ENCODE measurements at regions of chr7 and their contacts with region 1.

Region 1: GRCh38 chr7:108146070-108146837 is 16.1 kb upstream of the LAMB4 start:
- DNase-seq: peak; percentile 69
- H3K4me3 ChIP-seq: no peak overlapping the region
- H3K27ac ChIP-seq: peak overlapping the region in 1 of 2 experiments; percentile 40; a peak in 1 of 4 replicates
- H3K4me1 ChIP-seq: peaks cover 0 to 6% of the 10 kb centered on the region in 2 experiments; a peak in 1 of 4 replicates
- H3K27me3 ChIP-seq: no peaks in the 10 kb centered on the region
- CTCF ChIP-seq: peak; percentile 100
- EP300 ChIP-seq: peak in 1 of 2 experiments; percentile 50; a peak in 1 of 4 replicates
- RAD21 ChIP-seq: peak; percentile 100

Region 2: DNA sequence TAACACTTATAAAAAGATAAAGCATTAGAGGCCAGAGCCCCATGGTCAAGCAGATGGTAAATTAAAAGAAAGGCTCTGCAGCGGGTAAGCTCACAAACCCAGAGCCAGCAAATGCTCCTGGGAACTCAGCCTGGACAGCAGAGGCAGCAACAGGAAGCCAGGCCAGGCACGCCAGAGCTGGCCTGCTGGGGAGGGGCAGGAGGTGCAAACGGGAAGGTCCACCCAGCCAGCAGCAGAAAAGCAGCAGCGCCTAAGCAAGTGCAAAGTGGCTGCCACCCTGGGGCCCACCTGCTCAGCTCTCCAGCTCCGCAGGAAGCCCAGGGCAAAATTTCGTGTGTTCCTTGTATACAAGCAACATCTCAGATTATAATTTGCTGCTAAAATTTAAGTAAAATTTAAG is 759.1 kb before region 1 on chr7:
- CTCF ChIA-PET with region 1: no interaction called
- POLR2A ChIA-PET with region 1: no interaction called
- DNase-seq: peak; percentile 75
- H3K4me3 ChIP-seq: no peak overlapping the region
- H3K27ac ChIP-seq: peak overlapping the region; percentile 74 to 96
- H3K4me1 ChIP-seq: peaks cover 8 to 27% of the 10 kb centered on the region in 2 experiments; a peak in 3 of 4 replicates
- H3K27me3 ChIP-seq: no peaks in the 10 kb centered on the region
- CTCF ChIP-seq: no peak
- EP300 ChIP-seq: peak in 1 of 2 experiments; percentile 43; a peak in 1 of 4 replicates
- RAD21 ChIP-seq: peak; percentile 44

Region 3: DNA sequence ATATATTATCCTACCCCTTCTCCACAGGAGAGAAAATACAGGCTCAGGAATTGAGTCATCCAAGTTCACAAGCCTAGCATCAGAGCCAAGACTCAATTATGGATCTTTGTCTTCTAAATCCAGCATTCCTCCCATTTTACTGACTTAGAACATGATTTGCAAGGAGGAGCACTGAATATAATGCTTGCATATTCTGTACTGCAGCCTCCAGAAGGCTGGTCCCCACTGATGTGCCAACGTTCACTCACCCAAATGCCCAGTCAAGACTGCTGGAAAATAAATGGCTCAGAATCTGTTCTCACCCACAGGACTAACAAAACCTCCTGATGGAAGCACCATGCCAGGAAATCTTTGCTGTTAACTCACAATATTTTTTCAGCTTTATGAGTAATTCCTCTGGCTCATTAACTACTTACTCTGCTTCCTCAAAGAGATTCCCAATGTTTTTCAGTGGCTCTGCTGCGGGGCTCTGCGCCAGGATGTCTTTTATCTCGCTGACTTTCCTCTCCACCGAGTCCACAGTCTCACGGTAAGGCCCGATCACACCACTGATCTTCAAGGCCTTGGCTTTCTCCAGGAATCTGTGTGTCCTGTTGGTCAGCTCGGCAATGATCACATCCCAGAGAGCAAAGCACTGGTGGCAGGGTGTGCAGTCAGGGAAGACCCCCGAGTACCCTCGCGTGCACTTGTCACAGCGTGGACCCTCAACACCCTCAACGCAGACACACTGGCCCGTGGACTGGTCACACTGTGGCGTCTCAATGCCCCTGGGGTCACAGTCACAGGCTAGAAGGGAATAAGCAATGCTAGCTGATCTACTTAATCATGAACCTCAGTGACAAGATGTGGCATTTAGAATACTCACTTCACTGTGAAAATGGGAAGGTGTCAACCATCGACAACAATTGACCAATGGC is 206.4 kb before region 1 on chr7:
- CTCF ChIA-PET with region 1: interaction called, 25 read pairs
- POLR2A ChIA-PET with region 1: no interaction called
- DNase-seq: no peak
- H3K4me3 ChIP-seq: no peak overlapping the region
- H3K27ac ChIP-seq: peak overlapping the region; percentile 95 to 98
- H3K4me1 ChIP-seq: peaks cover 43 to 59% of the 10 kb centered on the region in 2 experiments
- H3K27me3 ChIP-seq: no peaks in the 10 kb centered on the region
- CTCF ChIP-seq: no peak
- EP300 ChIP-seq: peak in 1 of 2 experiments; percentile 89; a peak in 2 of 4 replicates
- RAD21 ChIP-seq: no peak

Region 4: GRCh38 chr7:107972075-107972482 is 174.2 kb before region 1 on chr7:
- CTCF ChIA-PET with region 1: interaction called, 13 read pairs
- POLR2A ChIA-PET with region 1: no interaction called
- DNase-seq: peak; percentile 50
- H3K4me3 ChIP-seq: no peak overlapping the region
- H3K27ac ChIP-seq: peak overlapping the region; percentile 56 to 89
- H3K4me1 ChIP-seq: peaks cover 7 to 17% of the 10 kb centered on the region in 2 experiments
- H3K27me3 ChIP-seq: no peaks in the 10 kb centered on the region
- CTCF ChIP-seq: no peak
- EP300 ChIP-seq: peak in 1 of 2 experiments; percentile 87; a peak in 2 of 4 replicates
- RAD21 ChIP-seq: no peak

Region 5: DNA sequence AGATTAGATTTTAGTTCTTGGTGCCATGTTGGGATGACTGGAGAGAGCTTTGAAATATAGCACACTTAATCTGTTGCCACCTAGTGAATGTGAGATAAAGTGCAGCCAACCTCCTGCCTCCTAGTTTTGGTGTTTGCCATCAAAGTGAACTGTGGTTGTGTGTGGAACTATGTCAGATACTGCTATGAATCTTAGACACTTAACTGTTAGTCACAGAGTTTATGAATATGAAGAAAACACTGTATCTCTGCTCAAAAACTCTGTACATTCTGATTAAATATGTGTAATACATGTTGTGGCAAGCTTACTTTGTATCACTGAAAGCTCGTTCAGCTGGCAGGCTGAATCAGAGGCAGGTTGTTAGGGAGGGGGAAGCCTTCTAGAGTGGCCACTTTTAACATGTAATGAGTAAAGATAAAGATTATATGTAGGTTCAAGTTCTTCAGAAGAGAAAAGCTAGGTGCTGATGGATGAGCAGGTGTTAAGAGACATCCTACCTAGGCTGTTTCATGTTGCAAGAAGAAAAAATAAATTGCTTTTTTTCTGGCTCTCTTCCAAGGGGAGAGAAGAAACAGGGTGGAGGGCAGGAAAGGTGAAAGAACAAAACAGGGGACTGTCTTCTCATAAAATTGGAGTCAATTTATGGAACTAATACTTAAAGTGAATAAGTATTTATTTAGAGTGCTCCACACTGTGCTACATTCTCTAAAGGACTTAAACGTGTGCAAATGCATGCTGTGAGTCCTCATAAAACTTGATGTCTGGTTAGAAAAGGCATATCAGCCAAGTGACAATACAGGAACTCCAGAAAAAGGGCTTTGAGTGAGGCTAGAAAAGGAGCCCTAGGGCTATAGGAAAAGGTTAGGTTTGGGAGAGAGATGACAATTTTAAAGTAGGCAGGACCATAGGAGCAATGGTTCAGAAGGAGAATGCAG is 129.1 kb before region 1 on chr7:
- CTCF ChIA-PET with region 1: interaction called, 10 read pairs
- POLR2A ChIA-PET with region 1: no interaction called
- DNase-seq: peak; percentile 36
- H3K4me3 ChIP-seq: no peak overlapping the region
- H3K27ac ChIP-seq: peak overlapping the region in 1 of 2 experiments; percentile 95; a peak in 2 of 4 replicates
- H3K4me1 ChIP-seq: peaks cover 4 to 43% of the 10 kb centered on the region in 2 experiments
- H3K27me3 ChIP-seq: no peaks in the 10 kb centered on the region
- CTCF ChIP-seq: peak; percentile 73
- EP300 ChIP-seq: peak in 1 of 2 experiments; percentile 24; a peak in 1 of 4 replicates
- RAD21 ChIP-seq: peak; percentile 75

Region 6: GRCh38 chr7:108120933-108121332 is 25.3 kb before region 1 on chr7:
- CTCF ChIA-PET with region 1: interaction called, 19 read pairs
- POLR2A ChIA-PET with region 1: no interaction called
- DNase-seq: no peak
- H3K4me3 ChIP-seq: no peak overlapping the region
- H3K27ac ChIP-seq: no peak overlapping the region
- H3K4me1 ChIP-seq: no peaks in the 10 kb centered on the region; a peak in 1 of 4 replicates
- H3K27me3 ChIP-seq: no peaks in the 10 kb centered on the region
- CTCF ChIP-seq: no peak
- EP300 ChIP-seq: no peak
- RAD21 ChIP-seq: no peak

Region 7: GRCh38 chr7:108497082-108497725 is 350.9 kb after region 1 on chr7:
- CTCF ChIA-PET with region 1: interaction called, 26 read pairs
- POLR2A ChIA-PET with region 1: no interaction called
- DNase-seq: peak; percentile 66
- H3K4me3 ChIP-seq: no peak overlapping the region; a peak in 1 of 4 replicates
- H3K27ac ChIP-seq: no peak overlapping the region
- H3K4me1 ChIP-seq: no peaks in the 10 kb centered on the region
- H3K27me3 ChIP-seq: no peaks in the 10 kb centered on the region
- CTCF ChIP-seq: peak; percentile 99
- EP300 ChIP-seq: no peak
- RAD21 ChIP-seq: peak; percentile 96